Cardiac septum (tissue), 1 donor: ENCODE measurements at regions of chr5 and their contacts with region 1.

Region 1: DNA sequence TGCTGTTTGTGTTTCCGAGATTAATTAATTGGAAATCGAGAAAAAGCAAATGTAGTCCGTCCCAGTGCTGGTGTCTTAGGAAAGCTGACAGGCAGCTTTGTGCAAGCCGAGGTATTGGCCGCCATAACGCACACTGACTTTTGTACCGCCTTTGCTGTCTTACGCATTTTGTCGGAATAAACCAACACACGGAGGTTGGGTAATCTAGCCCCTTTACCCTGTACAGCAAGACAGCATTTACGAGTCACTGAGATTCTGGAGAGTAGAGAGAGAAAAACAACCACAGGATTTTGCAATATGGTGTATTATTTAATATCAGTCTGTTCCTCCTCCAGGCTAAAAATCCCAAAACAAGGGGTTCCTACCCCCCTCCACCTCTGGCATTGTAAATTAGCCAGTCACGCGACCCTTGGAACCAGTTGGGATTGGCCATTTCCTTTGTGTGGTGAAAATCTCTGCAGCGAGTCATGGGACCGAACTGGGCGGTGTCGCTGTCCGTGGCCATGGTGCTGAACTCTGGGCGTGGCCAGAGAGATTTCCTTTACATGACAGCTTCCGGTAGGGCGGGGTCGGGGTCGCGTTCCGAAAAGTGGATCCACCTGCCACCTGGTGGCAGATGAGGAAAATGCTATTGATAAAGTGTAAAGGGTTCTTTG is 10.3 kb upstream of the PCDHB1 start:
- DNase-seq: peak; percentile 92

Region 2: DNA sequence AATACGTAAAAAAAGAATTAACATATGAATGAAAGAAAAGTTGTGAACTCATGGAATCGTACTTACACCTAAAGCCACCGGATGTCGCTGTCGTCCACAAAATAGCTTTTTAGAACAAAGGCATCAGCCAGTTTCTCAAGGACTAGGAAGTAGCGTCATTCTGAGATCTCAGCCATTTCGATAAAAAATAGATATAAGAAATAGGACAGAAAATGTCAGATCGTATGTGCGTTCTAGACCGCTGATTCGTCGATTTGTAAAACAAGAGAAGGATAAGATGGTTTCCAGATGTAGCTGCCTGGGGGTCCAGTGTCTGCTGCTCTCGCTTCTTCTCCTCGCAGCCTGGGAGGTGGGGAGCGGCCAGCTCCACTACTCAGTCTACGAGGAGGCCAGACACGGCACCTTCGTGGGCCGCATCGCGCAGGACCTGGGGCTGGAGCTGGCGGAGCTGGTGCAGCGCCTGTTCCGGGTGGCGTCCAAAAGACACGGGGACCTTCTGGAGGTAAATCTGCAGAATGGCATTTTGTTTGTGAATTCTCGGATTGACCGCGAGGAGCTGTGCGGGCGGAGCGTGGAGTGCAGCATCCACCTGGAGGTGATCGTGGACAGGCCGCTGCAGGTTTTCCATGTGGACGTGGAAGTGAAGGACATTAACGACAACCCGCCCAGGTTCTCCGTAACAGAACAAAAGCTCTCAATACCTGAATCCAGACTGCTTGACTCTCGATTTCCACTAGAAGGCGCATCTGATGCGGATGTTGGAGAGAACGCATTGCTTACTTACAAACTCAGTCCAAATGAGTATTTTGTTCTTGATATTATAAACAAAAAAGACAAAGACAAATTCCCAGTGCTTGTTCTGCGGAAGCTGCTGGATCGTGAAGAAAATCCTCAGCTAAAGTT is 184.9 kb before region 1 on chr5 and contains the start of gene PCDHA10:
- intact Hi-C with region 1: loop called (anchors 10 kb)
- DNase-seq: no peak
- total RNA-seq, gene PCDHA10: 0.30 TPM

Region 3: GRCh38 chr5:140882591-140882899 is 158.4 kb before region 1 on chr5:
- intact Hi-C with region 1: loop called (anchors 5 kb)
- DNase-seq: no peak

Region 4: GRCh38 chr5:140926443-140927227 is 114.3 kb before region 1 on chr5:
- intact Hi-C with region 1: loop called (anchors 2 kb)
- DNase-seq: no peak

Region 5: GRCh38 chr5:141475625-141476131 is 434.8 kb after region 1 on chr5 and contains the start of gene PCDHGC3:
- intact Hi-C with region 1: no loop called
- DNase-seq: peak; percentile 94
- total RNA-seq, gene PCDHGC3: 16.9 TPM